A673 (cell line): ENCODE measurements at regions of chr7 and their contacts with region 1.

Region 1: GRCh38 chr7:121337398-121337797 is 8.6 kb downstream of the WNT16 start:
- DNase-seq: peak; percentile 49
- H3K4me3 ChIP-seq: no peak overlapping the region
- H3K27ac ChIP-seq: no peak overlapping the region
- H3K4me1 ChIP-seq: no peaks in the 10 kb centered on the region
- H3K27me3 ChIP-seq: peaks cover 43% of the 10 kb centered on the region
- CTCF ChIP-seq: peak; percentile 50

Region 2: GRCh38 chr7:121132940-121133339 is 204.5 kb before region 1 on chr7:
- CTCF ChIA-PET with region 1: no interaction called
- POLR2A ChIA-PET with region 1: no interaction called
- intact Hi-C with region 1: loop called (anchors 5 kb)
- DNase-seq: no peak
- H3K4me3 ChIP-seq: no peak overlapping the region
- H3K27ac ChIP-seq: no peak overlapping the region
- H3K4me1 ChIP-seq: peaks cover 10% of the 10 kb centered on the region
- H3K27me3 ChIP-seq: no peaks in the 10 kb centered on the region
- CTCF ChIP-seq: no peak

Region 3: GRCh38 chr7:121676168-121676567 is 338.8 kb after region 1 on chr7:
- CTCF ChIA-PET with region 1: no interaction called
- POLR2A ChIA-PET with region 1: no interaction called
- intact Hi-C with region 1: no loop called
- DNase-seq: no peak
- H3K4me3 ChIP-seq: no peak overlapping the region
- H3K27ac ChIP-seq: no peak overlapping the region
- H3K4me1 ChIP-seq: no peaks in the 10 kb centered on the region
- H3K27me3 ChIP-seq: no peaks in the 10 kb centered on the region
- CTCF ChIP-seq: no peak